A673 (cell line): ENCODE measurements at regions of chr9 and their contacts with region 1.

Region 1: GRCh38 chr9:83219152-83219923 is 156.4 kb upstream of the RASEF start:
- DNase-seq: peak; percentile 65
- H3K4me3 ChIP-seq: peak overlapping the region; percentile 41
- H3K27ac ChIP-seq: no peak overlapping the region
- H3K4me1 ChIP-seq: peaks cover 4% of the 10 kb centered on the region
- H3K27me3 ChIP-seq: peaks cover 15% of the 10 kb centered on the region
- CTCF ChIP-seq: peak; percentile 40; the same call in 1 of the 2 replicates

Region 2: DNA sequence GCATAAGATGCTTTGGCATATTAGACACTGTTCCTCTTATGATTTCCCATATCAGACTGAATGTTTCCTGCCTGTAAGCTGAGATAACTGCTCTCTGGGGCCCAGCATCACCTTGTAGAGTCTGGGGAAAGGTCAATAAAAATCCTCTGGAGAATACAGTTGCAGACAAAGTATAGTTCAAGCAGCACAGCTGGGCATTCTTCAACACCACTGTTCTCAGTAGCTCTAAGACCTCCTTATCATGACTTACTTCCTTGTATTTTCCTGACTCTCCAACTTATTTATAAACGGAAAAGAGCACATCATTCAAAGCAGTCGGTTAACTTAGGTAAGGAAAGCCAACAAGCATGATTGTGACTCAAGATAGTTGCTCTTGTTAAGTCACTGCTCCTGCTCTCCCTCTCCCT is 52.3 kb after region 1 on chr9:
- CTCF ChIA-PET with region 1: no interaction called
- POLR2A ChIA-PET with region 1: no interaction called
- intact Hi-C with region 1: loop called (anchors 10 kb)
- DNase-seq: no peak
- H3K4me3 ChIP-seq: no peak overlapping the region
- H3K27ac ChIP-seq: no peak overlapping the region
- H3K4me1 ChIP-seq: no peaks in the 10 kb centered on the region
- H3K27me3 ChIP-seq: no peaks in the 10 kb centered on the region
- CTCF ChIP-seq: no peak